ENCODE measurements at regions of chr1 and their contacts with region 1.

Region 1: DNA sequence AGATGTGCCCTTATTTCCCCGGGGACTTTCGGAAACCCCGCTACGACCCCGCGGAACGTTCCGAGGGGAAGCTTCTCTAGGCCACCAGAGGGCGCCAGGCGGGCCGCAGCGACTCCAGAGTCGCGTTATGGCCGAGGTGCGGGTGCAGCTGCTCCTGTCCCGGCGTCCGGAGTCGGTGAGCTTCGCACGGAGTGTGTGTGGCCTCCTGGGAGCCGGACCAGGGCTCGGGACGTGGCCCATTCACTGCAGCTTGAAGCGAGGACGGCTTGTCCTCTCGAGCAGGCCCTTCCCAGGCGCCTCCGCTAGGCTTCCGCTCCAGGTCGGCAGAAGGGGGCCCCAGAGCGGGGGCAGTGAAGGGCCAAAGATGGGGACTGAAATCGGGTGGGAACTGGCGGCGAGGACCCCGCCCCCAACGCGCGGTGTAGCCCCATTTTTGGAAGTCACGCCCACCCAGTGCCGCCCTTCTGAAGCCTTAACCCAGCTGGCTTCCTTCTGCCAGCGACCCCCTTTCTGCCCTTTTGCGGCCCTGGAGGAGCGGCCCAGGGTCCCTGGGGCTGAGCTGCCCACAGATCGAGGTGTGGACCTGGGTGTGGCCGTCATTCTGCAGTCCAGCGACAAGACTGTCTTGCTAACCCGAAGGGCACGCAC is at the start of gene NUDT17:
- DNase-seq: peak; percentile 78 to 89 (median 83)
- H3K4me3 ChIP-seq: peak within 1 kb of the TSS in 2 of 4 donors; percentile 44 to 49
- H3K27ac ChIP-seq: peak within 1 kb of the TSS in 3 of 5 donors; percentile 37 to 67 (median 63)
- H3K4me1 ChIP-seq: peaks cover 9 to 15% of the 10 kb centered on the region in 2 donors
- H3K27me3 ChIP-seq: no peaks in the 10 kb centered on the region
- CTCF ChIP-seq: peak; percentile 80 to 94 (median 89)
- POLR2A ChIP-seq: peak in 1 of 2 donors; percentile 27
- total RNA-seq, gene NUDT17: 1.5 to 6.5 (median 3.4) TPM

Region 2: DNA sequence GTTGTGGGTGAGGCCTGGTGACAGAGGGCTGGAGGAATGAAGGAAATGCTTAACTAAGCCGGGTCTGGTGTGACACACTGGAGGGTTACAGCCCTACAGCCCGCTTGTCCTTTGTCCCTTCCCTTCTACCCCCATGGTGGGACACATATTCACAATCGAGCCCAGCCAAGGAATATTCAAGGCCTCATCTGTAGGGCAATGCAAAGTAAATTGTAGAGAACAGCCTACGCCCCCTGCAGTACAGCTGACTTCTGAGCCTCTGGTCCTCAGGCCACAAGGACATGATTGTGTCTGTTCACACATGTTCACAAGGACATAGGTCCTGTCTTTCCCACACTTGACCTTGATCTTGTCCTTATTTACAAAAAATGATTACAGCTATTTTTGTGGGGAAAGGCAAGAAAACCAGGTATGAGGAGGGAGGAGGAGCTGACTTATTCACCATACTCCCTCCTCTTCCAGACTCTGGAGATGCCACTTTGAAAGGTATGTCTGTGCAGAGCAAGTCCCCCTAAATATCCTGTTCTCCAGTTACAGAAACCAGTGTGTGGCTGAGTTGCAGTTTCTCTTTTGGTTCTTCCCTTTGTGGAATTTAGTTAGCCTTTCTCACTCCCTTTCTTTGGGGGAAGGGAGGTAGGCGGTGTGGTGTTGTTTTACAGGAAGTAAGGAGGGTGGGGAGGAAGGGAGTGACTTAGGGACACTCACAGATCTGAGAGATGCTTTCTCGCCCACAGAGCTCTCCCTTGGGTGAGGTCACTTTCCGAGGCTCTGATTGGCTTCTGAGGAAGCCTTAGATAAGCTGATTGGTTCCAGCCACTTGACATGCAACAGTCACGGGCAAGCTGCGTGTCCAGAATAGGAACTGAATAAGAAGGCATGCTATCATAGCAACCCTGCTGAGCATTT is 133.5 kb after region 1 on chr1:
- intact Hi-C with region 1: loop called in 1 of 2 experiments (anchors 10 kb)
- DNase-seq: peak; percentile 91 to 99 (median 97)
- H3K4me3 ChIP-seq: peak overlapping the region in 2 of 4 donors; percentile 5 to 37
- H3K27ac ChIP-seq: peak overlapping the region; percentile 91 to 96 (median 94)
- H3K4me1 ChIP-seq: peaks cover 44 to 64% of the 10 kb centered on the region in 2 donors
- H3K27me3 ChIP-seq: no peaks in the 10 kb centered on the region
- CTCF ChIP-seq: peak in 2 of 6 experiments; percentile 19 to 33
- POLR2A ChIP-seq: peak; percentile 15 to 86

Measured in adrenal gland (tissue), 19 donors.